Dorsolateral prefrontal cortex (tissue), 120 donors: ENCODE measurements at regions of chr6 and their contacts with region 1.

Region 1: GRCh38 chr6:23180504-23181293 is 611.3 kb downstream of the HDGFL1 start:
- DNase-seq: peak; percentile 37 to 95 (median 71)
- H3K4me3 ChIP-seq: peak overlapping the region in 2 of 59 donors; percentile 19 to 27
- H3K27ac ChIP-seq: peak overlapping the region in 30 of 59 donors; percentile 8 to 73 (median 44)
- H3K27me3 ChIP-seq: no peaks in the 10 kb centered on the region
- CTCF ChIP-seq: peak in 8 of 56 donors; percentile 6 to 20 (median 16)

Region 2: DNA sequence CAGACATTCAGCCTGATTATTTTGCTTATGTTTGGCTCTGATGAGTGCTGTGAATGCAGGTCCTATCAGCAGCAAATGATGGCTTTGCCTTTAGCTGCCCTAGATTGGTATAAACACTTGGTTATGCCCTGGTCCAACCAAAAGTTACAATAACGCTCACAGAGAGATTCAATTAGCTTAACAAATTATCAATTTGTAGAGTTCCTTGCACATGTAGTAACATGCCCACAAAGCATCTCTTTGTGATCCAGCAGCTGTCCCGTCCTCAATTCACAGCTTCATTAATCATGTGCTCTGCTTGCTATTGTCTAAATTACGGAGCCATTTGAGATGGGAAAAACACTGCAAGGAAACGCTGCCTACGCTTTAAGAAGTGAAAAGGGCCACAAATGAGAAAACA is 153.4 kb before region 1 on chr6:
- intact Hi-C with region 1: loop called in 1 of 2 experiments (anchors 10 kb)
- DNase-seq: peak in 5 of 10 donors; percentile 19 to 66 (median 55)
- H3K4me3 ChIP-seq: peak overlapping the region in 8 of 59 donors; percentile 1 to 36 (median 6)
- H3K27ac ChIP-seq: peak overlapping the region in 57 of 59 donors; percentile 40 to 97 (median 86)
- H3K27me3 ChIP-seq: no peaks in the 10 kb centered on the region
- CTCF ChIP-seq: peak in 5 of 56 donors; percentile 6 to 24 (median 7)

Region 3: DNA sequence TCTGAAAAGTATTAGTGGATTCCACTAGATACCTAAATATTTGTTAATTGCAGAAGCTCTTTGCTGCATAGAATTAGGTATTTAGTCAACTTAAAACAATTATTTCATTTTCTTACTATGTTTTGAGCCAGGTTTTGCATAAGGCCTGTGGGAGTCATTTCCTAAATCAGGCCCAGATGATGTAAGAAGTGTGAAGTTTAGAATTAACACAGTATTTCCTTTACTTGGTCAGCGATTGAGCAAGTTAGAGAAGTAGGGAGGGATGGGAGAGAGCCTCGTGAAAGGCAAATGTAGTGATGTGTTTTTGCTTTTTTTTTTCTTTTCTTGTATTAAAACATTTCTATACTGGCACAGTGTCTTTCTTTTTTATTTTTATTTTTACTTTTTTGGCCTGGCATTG is 99.7 kb after region 1 on chr6:
- intact Hi-C with region 1: loop called in 1 of 2 experiments (anchors 5 kb)
- DNase-seq: no peak
- H3K4me3 ChIP-seq: no peak overlapping the region
- H3K27ac ChIP-seq: peak overlapping the region in 5 of 59 donors; percentile 18 to 66 (median 30)
- H3K27me3 ChIP-seq: no peaks in the 10 kb centered on the region
- CTCF ChIP-seq: no peak